PC-3 (cell line): ENCODE measurements at regions of chr6 and their contacts with region 1.

Region 1: GRCh38 chr6:66578362-66578761 is 871.3 kb upstream of the EYS start:
- DNase-seq: no peak
- ATAC-seq: no peak
- H3K4me3 ChIP-seq: no peak overlapping the region
- H3K27ac ChIP-seq: no peak overlapping the region
- H3K4me1 ChIP-seq: no peaks in the 10 kb centered on the region
- H3K27me3 ChIP-seq: no peaks in the 10 kb centered on the region
- CTCF ChIP-seq: no peak

Region 2: DNA sequence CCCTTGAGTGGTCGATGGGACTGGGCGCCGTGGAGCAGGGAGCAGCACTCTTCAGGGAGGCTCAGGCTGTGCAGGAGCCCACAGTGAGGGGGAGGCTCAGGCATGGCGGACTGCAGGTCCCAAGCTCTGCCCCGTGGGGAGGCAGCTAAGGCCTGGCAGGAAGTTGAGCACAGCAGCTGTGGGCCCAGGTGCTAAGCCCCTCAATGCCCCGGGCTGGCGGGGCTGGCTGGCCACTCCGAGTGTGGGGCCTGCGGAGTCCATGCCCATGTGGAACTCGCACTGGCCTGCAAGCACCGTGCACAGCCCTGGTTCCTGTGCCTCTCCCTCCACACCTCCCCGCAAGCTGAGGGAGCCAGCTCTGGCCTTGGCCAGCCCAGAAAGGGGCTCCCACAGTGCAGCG is 77.1 kb after region 1 on chr6:
- CTCF ChIA-PET with region 1: no interaction called
- POLR2A ChIA-PET with region 1: interaction called, 14 read pairs
- intact Hi-C with region 1: no loop called
- DNase-seq: no peak
- ATAC-seq: no peak
- H3K4me3 ChIP-seq: no peak overlapping the region
- H3K27ac ChIP-seq: no peak overlapping the region
- H3K4me1 ChIP-seq: no peaks in the 10 kb centered on the region
- H3K27me3 ChIP-seq: no peaks in the 10 kb centered on the region
- CTCF ChIP-seq: no peak